ENCODE measurements at regions of chr1 and their contacts with region 1.

Region 1: DNA sequence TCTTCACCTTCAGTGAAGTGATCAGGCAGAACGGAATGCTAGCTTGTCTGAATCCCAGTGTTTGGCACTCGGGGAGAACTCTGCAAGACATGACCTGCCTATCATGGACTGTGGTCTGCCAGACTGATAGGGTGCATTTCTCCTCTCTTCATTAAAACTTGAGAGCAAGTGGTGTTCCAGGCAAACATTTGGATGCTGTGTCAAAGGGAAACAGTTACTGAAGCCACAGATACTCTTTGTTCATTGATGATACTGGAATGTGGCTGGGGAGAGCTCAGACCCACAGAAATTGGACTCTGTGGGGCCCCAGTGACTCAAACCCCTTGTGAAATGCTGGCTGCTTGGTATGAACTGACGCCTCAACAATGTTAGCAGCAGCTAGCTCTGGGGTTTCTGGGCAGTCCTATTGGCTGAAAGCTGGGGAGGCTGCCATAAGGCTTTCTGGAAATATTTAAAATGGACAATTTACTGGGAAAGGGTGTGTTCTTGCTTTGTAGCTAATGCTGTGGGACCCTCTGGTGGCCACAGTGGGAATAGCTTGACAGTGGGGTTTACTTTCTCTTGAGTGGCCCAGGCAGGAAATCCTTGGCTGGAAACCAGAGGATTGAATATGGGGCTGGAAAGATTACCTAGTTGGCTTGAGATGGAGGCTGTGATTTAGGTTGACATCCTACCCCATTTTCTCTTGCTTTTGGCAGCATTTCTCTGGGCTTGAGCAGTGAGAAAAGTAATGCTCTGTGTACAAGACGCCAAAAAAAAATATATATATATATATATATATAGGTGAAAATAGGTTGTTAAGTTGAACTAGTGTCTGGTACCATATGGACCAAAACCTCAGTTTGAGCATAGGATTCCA is 8.0 kb upstream of the S100A10 start:
- DNase-seq: peak; percentile 96
- H3K4me3 Mint-ChIP-seq: peak overlapping the region; percentile 28
- H3K27ac Mint-ChIP-seq: peak overlapping the region; percentile 33
- H3K4me1 Mint-ChIP-seq: peaks cover 55% of the 10 kb centered on the region
- H3K27me3 Mint-ChIP-seq: no peaks in the 10 kb centered on the region
- CTCF ChIP-seq: peak; percentile 98

Region 2: DNA sequence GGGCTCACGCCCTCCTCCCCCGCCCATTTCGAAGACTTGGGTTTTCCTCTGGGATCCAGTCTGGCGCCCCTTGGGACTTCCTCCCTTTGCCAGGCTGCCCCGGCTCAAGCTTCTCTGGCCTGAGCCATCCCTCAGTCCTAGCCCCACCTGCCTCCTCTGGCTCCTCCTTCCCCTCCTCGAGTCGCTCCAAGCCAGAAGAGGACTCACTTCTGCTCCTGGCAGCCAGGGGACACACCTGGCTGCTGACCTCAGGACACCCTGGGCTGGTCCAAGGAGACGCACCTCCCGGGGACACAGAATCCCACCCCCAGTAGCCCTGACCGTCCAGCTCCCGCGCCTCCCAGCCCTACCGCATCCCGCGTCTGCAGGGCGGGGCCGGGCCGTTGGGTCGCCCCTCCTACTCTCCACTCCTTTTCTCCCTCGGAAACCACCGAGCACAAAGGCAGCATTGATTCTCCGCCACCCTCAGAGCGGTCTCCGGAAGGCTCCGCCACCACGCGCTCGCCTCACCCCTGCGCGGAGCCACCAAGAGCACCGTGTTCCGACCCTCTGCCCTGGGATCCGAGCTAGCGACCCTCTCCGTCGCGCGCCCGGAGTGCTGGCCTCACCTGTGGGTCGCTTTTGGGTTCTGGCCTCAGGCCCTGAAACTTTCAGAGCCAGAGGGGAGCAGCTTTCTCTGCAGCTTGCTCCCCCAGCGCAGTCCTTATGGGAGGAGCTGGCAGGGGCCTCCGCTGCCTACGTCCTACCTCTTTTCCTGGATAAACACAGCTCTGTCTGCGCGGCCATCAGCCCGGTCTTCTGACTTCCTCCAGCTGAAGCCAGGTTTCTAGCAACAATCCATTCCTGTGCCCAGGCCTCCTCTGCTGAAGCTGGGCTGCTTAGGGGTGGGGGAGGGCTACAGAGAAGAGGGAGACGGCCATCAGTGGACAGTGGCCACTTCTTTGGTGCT is 161.9 kb before region 1 on chr1 and contains the start of gene C2CD4D:
- CTCF ChIA-PET with region 1: interaction called, 4 read pairs
- POLR2A ChIA-PET with region 1: no interaction called
- intact Hi-C with region 1: loop called (anchors 1 kb)
- DNase-seq: peak; percentile 84
- H3K4me3 Mint-ChIP-seq: peak within 1 kb of the TSS; percentile 85
- H3K27ac Mint-ChIP-seq: peak within 1 kb of the TSS; percentile 91
- H3K4me1 Mint-ChIP-seq: peaks cover 41% of the 10 kb centered on the region
- H3K27me3 Mint-ChIP-seq: no peaks in the 10 kb centered on the region
- CTCF ChIP-seq: no peak
- total RNA-seq, gene C2CD4D: not detected in 2 replicates

Region 3: DNA sequence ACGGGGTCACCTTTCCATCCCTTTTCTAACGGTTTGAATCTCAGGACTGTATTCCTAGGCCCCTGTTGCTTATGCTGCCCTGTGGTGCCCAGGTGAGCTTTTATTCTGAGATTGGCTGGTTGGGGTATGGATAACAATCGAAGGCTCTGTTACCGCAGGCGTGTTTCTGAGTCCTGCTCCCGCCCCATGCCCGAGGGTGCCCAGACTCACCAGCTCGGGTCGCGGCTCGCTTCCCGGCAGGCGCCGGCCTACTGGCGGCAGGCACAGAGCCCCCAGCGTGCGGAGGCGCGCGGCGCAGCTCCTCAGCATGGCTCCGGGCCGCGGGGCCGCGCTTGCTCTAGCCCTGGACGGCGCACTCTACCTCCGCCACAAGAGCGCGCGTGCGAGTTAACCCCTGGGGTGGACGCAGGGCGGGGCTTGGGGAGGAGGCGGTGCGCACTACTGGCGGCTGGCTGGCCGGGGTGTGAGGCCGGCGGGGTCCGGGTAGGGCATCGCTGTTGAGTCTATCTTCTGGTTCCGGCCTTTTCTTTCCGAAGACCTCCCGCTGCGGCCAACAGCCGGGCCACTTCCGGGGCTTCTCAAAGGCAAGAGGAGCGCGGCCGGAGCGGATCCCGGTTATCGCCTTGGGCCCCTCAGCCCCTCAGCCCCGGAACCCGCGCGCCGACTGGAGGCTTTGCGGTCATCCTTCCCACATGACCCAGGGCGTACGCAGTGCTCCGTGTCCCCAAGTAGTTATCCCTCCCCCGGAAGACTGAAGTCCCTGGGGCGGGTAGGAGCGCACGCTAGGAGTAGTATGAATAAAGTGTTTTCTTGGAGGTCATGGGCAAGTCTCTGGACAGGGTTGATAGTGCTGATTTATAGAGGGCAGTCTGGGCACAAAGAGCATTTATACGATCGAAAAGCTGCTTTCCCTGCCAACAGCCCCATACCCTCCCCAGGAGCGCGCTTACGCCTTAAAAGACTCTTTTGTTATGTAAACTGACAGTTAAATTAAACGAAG is 92.2 kb before region 1 on chr1 and contains the start of gene THEM4:
- CTCF ChIA-PET with region 1: interaction called, 72 read pairs
- POLR2A ChIA-PET with region 1: interaction called, 63 read pairs
- intact Hi-C with region 1: loop called (anchors 1 kb)
- DNase-seq: peak; percentile 99
- H3K4me3 Mint-ChIP-seq: peak within 1 kb of the TSS; percentile 99
- H3K27ac Mint-ChIP-seq: peak within 1 kb of the TSS; percentile 99
- H3K4me1 Mint-ChIP-seq: peaks cover 17% of the 10 kb centered on the region
- H3K27me3 Mint-ChIP-seq: no peaks in the 10 kb centered on the region
- CTCF ChIP-seq: peak; percentile 25
- total RNA-seq, gene THEM4: 27.5 and 29.1 TPM in 2 replicates

Region 4: DNA sequence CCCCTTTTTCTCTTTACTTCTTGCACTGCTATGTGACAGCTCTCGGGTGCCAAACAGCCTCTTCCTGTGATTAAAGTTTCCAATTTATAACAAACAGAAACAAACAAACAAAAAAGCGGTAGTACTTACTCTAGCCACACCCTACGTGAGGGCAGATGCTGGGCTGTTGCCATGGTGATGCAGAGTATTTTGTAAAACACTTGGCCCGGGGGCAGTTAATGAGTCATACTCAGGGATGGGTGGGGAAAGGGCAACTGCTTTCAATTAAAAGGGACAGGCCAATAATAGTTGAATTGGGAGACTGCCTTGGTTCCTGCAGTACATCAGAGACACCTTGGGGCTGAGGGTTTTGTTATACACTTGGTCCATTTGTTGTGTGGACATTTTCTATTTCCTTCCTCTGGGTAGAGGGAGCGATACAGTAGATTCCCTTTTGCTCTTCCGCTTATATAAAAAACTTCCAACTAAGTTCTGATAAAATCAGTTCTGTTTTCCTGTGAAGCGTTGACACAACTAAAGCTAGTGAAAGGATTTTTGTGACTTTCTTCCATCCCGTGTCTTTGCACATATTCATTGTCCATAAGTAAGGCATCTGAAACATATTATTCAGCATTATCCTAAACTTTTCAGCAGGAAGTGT is 55.8 kb before region 1 on chr1:
- CTCF ChIA-PET with region 1: interaction called, 350 read pairs
- POLR2A ChIA-PET with region 1: interaction called, 453 read pairs
- intact Hi-C with region 1: no loop called
- DNase-seq: peak; percentile 100
- H3K4me3 Mint-ChIP-seq: peak overlapping the region; percentile 16
- H3K27ac Mint-ChIP-seq: peak overlapping the region; percentile 99
- H3K4me1 Mint-ChIP-seq: peaks cover 33% of the 10 kb centered on the region
- H3K27me3 Mint-ChIP-seq: no peaks in the 10 kb centered on the region
- CTCF ChIP-seq: no peak

Region 5: DNA sequence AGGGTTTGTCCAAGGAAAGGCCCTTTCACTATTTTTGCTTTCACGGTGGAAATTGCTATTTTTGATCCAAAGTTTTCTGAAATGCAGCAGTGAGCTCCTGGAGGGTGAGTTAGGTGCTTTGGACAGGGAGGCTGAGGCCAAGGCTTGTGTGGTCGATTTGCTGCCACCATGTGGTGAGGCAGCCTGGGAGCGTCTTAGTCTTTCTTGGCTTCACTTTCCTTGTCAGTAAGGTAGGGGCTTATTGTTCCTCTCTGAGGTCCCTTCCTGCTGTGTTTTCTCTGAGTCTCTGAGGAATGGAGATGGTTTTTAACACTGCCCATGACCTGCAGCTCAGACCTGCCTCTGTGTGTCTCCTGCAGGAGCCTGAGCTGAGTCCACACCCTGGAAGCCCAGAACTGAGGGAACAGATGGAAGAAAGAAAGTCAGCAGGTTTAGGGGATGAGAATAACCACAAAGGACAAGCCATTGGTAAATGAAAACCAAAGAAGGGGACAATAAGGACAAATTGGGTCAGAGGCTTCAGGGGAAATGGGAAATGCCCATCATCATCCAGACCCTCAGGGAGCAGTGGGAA is 12.1 kb after region 1 on chr1:
- CTCF ChIA-PET with region 1: interaction called, 143 read pairs
- POLR2A ChIA-PET with region 1: interaction called, 26 read pairs
- intact Hi-C with region 1: no loop called
- DNase-seq: peak; percentile 76
- H3K4me3 Mint-ChIP-seq: no peak overlapping the region
- H3K27ac Mint-ChIP-seq: no peak overlapping the region
- H3K4me1 Mint-ChIP-seq: peaks cover 12% of the 10 kb centered on the region
- H3K27me3 Mint-ChIP-seq: no peaks in the 10 kb centered on the region
- CTCF ChIP-seq: peak; percentile 75

Measured in MCF 10A (cell line).